ENCODE measurements at regions of chr10 and their contacts with region 1.

Region 1: DNA sequence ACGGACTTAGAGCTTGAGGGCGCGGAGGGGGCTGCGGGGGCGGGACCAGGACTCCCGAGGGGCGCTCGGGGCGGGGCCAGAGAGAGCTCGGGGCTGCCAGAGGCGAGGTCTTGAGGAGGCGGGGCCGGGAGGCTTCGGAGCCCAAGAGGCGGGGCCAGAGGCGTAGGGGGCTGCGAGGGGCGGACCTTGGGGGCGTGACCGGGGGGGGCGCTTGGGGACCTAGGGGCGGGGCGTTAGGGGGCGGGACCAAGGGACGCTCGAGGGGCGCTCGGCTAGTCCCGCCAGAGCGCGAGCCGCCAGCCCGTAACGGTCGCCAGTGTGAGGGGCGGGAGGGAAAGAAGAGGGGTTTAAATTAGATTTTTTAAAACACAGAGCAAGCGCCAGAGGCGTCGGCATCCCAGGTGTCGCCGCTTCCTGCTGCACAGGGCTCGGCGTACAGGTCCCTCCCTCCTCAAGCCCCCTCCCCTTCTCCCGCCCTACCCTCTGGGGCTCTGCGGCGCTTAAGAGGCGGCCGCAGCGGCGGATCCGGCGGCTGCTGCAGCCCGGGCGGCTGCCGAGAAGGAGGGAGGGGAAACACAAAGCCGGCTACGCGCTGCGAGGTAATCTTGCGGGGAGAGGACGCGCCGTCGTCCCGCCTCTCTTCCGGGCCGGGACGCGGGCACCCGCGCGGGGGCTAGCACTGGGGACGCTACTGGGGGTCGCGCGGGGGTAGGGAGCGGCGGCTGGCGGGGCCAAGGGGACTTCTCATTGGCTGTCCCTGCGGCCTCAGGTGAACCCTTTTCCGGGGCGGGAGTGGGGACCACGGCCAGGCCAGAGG is at the start of gene ADD3:
- DNase-seq: peak; percentile 85
- H3K4me3 Mint-ChIP-seq: no peak within 1 kb of the TSS
- H3K27ac Mint-ChIP-seq: peak within 1 kb of the TSS; percentile 91
- H3K4me1 Mint-ChIP-seq: peaks cover 45% of the 10 kb centered on the region
- H3K27me3 Mint-ChIP-seq: no peaks in the 10 kb centered on the region
- total RNA-seq, gene ADD3: 85.2 to 85.8 TPM

Region 2: DNA sequence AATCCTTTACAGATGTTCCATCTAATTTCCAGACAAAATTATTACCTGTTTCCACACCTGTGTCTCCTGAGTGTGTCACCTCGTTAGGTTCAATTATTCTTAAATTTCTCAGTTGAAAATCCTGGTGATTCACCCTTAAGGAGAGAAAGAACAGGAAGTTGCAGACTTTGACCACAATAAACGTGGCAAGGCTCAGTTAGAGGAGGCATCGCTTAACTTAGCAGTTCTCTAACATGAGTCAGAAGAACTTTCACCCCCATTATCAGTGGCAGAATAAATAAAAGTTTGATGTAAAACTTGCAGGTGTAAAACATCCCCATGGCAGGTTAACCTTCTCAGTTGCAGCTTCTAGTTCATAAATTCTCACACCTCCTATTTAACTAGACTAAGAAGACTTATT is 92.9 kb before region 1 on chr10:
- CTCF ChIA-PET with region 1: no interaction called
- intact Hi-C with region 1: loop called (anchors 2 kb)
- DNase-seq: peak; percentile 72
- H3K4me3 Mint-ChIP-seq: no peak overlapping the region
- H3K27ac Mint-ChIP-seq: peak overlapping the region; percentile 67
- H3K4me1 Mint-ChIP-seq: peaks cover 86% of the 10 kb centered on the region
- H3K27me3 Mint-ChIP-seq: no peaks in the 10 kb centered on the region

Region 3: DNA sequence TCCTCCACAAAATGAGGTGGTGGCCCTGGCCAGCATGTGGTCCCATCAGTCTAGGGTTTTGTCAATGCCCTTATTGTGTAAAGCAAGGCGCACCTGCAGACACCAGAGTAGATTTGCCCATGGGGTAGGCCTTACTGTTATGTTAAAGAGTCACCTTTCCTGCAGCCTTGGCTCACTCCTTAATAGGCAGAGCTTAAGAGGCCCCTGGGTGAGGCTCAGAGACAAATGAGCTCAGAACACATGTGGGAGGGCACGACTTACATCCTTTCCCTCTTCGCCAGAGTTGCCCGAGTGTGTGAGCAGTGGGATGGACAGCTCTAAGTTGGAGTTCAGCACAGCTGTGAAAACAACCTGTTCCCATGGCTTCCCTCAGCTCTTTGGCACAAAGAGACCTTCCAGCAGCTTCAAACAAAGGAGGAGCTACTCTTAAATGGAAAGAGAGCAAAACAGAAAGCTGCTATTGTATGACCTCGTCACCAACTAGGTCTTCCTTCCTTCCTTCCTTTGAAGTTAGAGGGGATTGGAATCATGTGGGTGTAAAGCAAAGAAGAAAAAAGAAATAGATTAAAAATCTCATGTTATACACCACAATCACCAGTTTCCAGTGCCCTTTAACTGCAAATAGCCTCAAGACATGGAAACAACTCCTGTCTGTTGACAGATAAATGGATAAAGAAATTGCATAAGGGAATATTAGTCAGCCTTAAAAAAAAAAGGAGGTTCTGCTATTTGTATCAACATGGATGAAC is 72.8 kb before region 1 on chr10:
- CTCF ChIA-PET with region 1: interaction called, 5 read pairs
- intact Hi-C with region 1: loop called (anchors 5 kb)
- DNase-seq: peak; percentile 41
- H3K4me3 Mint-ChIP-seq: peak overlapping the region; percentile 75
- H3K27ac Mint-ChIP-seq: peak overlapping the region; percentile 93
- H3K4me1 Mint-ChIP-seq: peaks cover 74% of the 10 kb centered on the region
- H3K27me3 Mint-ChIP-seq: no peaks in the 10 kb centered on the region

Region 4: GRCh38 chr10:110036640-110037039 is 28.7 kb after region 1 on chr10:
- CTCF ChIA-PET with region 1: interaction called, 6 read pairs
- intact Hi-C with region 1: loop called (anchors 1 kb)
- DNase-seq: no peak
- H3K4me3 Mint-ChIP-seq: no peak overlapping the region
- H3K27ac Mint-ChIP-seq: peak overlapping the region; percentile 91
- H3K4me1 Mint-ChIP-seq: peaks cover 91% of the 10 kb centered on the region
- H3K27me3 Mint-ChIP-seq: no peaks in the 10 kb centered on the region

Region 5: GRCh38 chr10:110067960-110068770 is 60.3 kb after region 1 on chr10:
- CTCF ChIA-PET with region 1: interaction called, 7 read pairs
- intact Hi-C with region 1: loop called (anchors 2 kb)
- DNase-seq: peak; percentile 75
- H3K4me3 Mint-ChIP-seq: peak overlapping the region; percentile 56
- H3K27ac Mint-ChIP-seq: peak overlapping the region; percentile 91
- H3K4me1 Mint-ChIP-seq: peaks cover 82% of the 10 kb centered on the region
- H3K27me3 Mint-ChIP-seq: no peaks in the 10 kb centered on the region

Region 6: DNA sequence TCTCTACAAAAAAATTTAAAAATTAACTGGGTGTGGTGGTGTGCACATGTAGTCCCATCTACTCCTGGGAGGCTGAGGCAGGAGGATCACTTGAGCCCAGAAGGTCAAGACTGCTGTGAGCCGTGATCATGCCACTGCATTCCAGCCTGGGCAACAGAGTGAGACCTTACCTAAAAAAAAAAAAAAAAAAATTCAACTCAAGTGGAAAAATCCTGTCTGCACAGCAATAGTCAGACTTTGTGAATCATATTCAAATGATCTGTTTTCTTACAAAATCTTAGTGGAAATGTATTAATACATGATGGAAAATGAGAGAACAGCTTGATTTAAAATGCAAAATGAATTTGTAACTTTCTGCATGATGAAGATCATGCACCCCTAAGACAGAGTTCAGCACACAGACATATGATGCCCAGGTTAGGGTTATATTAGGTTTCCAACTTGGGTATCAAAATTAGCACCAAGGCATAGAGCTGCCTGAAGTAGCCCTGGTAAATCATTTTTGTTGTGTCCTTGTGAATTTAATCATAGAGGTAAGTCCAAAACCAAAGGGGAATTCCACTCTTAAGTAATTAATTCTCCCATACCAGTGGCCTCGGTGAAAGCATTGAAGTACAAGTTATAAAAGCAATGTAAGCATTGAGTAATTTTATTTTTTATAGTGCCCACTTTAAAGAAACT is 93.7 kb after region 1 on chr10:
- CTCF ChIA-PET with region 1: interaction called, 3 read pairs
- intact Hi-C with region 1: loop called (anchors 1 kb)
- DNase-seq: no peak
- H3K4me3 Mint-ChIP-seq: no peak overlapping the region
- H3K27ac Mint-ChIP-seq: peak overlapping the region; percentile 89
- H3K4me1 Mint-ChIP-seq: peaks cover 76% of the 10 kb centered on the region
- H3K27me3 Mint-ChIP-seq: no peaks in the 10 kb centered on the region

Region 7: GRCh38 chr10:110497438-110498086 is 489.7 kb after region 1 on chr10 and contains the start of gene DUSP5:
- CTCF ChIA-PET with region 1: no interaction called
- intact Hi-C with region 1: loop called (anchors 5 kb)
- DNase-seq: peak; percentile 94
- H3K4me3 Mint-ChIP-seq: peak within 1 kb of the TSS; percentile 97
- H3K27ac Mint-ChIP-seq: peak within 1 kb of the TSS; percentile 94
- H3K4me1 Mint-ChIP-seq: peaks cover 43% of the 10 kb centered on the region
- H3K27me3 Mint-ChIP-seq: no peaks in the 10 kb centered on the region
- total RNA-seq, gene DUSP5: 51.0 to 53.5 TPM

Region 8: DNA sequence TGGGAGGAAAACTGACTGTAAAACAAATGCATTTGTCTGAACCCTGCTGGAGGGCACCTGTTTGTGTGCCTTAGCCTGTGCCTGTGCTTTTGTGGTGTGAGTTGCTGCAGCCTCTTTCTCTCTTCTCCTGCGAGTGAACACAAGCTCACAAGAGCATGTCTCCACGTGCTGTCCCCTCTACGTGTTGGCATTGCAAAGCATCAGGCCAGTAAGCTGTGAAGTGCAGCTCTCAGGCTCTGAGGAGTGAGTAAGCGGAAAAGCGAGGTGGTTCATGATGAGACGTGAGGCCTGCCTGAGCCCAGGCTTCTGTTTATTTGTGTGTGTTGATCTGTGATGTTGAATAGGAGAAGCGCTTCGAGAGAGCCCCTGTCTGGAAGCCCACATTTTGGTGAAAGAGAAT is 778.3 kb after region 1 on chr10:
- CTCF ChIA-PET with region 1: no interaction called
- intact Hi-C with region 1: no loop called
- DNase-seq: peak; percentile 40
- H3K4me3 Mint-ChIP-seq: no peak overlapping the region
- H3K27ac Mint-ChIP-seq: peak overlapping the region; percentile 20
- H3K4me1 Mint-ChIP-seq: peaks cover 43% of the 10 kb centered on the region
- H3K27me3 Mint-ChIP-seq: no peaks in the 10 kb centered on the region

Measured in activated naive CD4-positive, alpha-beta T cell treated with anti-CD3 and anti-CD28 coated beads for 36 hours (primary cell).